HEK293T (cell line): ENCODE measurements at regions of chr11 and their contacts with region 1.

Region 1: GRCh38 chr11:47565340-47566148 is at the start of gene PTPMT1:
- DNase-seq: peak; percentile 70

Region 2: DNA sequence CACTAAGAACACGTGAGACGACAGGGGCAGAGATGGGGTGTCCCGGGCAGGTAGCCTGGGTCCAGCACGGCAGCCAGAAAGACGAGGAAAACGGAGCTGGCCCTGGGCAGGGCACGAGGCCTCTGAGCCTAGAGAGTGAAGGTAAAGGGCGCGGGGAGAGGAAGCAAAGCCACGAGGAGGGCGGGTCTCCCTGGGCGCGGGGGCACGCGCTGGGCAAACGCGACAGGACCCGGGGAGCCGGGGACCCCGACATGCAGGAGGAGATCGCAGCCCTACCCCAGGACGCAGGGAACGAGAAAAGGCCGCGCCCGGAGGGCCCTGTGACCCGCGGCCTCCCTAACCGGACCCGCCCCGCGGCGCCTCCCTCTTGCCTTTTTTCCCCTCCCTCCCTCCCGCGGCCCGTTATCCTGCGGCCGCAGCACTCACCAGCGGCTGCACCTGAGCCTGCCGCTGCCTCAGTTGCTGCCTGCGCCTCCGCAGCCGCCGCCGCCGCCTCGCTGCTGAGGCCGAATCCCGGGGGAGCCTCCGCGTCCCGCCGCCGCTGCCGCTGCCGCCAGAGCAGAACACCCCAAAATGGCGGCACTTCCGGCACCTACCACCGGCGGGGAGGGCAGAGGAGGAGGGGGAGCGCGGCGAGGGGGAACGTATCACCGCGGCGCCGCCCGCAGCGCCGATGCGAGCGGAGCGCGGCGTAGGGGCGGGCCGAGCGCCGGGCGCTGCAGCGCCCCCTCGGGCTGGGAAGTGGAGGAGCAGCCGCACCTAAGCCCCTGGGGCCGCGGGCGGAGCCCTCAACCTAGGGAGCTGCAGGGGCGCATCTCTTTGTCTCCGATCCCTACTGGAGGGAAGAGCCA is 12.8 kb before region 1 on chr11 and contains the start of gene CELF1:
- CTCF ChIA-PET with region 1: interaction called, 4 read pairs
- POLR2A ChIA-PET with region 1: interaction called, 18 read pairs
- DNase-seq: peak; percentile 91

Region 3: GRCh38 chr11:47578524-47579460 is 13.2 kb after region 1 on chr11 and contains the starts of genes KBTBD4 and NDUFS3:
- CTCF ChIA-PET with region 1: no interaction called
- POLR2A ChIA-PET with region 1: interaction called, 20 read pairs
- DNase-seq: peak; percentile 87